ENCODE measurements at regions of chr13 and their contacts with region 1.

Region 1: GRCh38 chr13:44259045-44260027 is 114.3 kb upstream of the SERP2 start:
- DNase-seq: peak; percentile 94
- H3K4me3 Mint-ChIP-seq: peak overlapping the region; percentile 62
- H3K27ac Mint-ChIP-seq: peak overlapping the region; percentile 88
- H3K4me1 Mint-ChIP-seq: peaks cover 24% of the 10 kb centered on the region
- H3K27me3 Mint-ChIP-seq: peaks cover 6% of the 10 kb centered on the region

Region 2: DNA sequence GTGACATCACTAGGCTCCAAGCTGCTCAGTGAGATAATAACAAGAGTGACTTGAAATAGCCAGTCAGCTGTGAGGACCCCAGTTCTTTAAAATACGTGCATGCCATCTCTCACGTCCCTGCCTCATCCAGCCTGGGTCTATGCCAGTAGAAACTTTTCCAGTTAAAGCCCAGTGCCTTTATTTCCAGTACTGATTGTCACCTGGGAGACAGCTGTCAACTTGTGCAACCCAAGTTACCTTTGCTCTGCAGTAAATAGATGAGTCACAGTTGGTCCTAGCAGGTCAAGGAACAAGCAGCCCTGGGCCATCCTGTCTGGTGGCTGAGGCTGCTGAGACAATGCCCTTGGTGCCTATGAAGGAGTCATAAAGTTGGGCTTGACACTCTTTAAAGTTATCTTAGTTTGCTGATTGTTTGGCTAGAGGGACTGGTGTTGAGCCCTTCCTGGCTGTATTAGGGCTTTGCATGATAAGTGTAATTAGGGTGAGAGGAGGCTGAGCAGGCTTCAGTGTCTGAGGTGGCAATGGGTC is 150.9 kb before region 1 on chr13:
- CTCF ChIA-PET with region 1: no interaction called
- intact Hi-C with region 1: no loop called
- DNase-seq: no peak
- H3K4me3 Mint-ChIP-seq: no peak overlapping the region
- H3K27ac Mint-ChIP-seq: no peak overlapping the region
- H3K4me1 Mint-ChIP-seq: no peaks in the 10 kb centered on the region
- H3K27me3 Mint-ChIP-seq: peaks cover 11% of the 10 kb centered on the region

Region 3: GRCh38 chr13:44197791-44198770 is 61.3 kb before region 1 on chr13:
- CTCF ChIA-PET with region 1: no interaction called
- intact Hi-C with region 1: loop called (anchors 1 kb)
- DNase-seq: peak; percentile 65
- H3K4me3 Mint-ChIP-seq: no peak overlapping the region
- H3K27ac Mint-ChIP-seq: no peak overlapping the region
- H3K4me1 Mint-ChIP-seq: peaks cover 36% of the 10 kb centered on the region
- H3K27me3 Mint-ChIP-seq: peaks cover 6% of the 10 kb centered on the region

Region 4: DNA sequence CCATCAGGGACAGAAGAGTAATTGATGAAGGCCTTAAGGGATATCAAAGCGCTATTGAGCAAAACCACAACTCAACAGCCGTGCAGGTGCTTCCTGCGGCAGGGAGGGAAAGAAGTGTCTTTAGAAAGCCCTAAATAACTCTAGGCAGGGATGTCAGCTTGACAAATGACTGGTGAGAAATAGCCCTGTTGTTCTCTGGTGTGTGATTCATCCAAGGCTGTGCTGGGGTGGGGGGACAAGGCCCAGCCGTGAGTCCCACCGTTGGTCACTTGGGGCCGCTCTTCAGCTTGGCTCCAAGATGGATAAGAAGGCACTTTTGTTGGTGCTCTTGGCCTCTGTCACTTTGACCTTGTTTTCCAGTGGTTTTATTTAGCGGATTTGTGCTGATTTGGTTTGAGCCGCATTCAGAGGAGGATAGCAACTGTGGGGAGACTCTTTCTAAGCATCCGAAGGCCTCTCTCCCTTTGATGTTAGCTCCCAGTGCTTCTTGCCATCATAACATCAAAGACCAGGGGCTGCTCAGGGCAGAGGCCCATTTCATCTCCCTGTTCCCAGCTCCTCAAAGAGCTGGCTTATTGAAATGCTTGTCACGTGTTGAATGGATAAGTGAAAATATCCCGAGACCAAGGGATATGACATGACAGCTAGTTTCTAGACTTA is 16.0 kb before region 1 on chr13:
- CTCF ChIA-PET with region 1: no interaction called
- intact Hi-C with region 1: loop called (anchors 1 kb)
- DNase-seq: peak; percentile 69
- H3K4me3 Mint-ChIP-seq: no peak overlapping the region
- H3K27ac Mint-ChIP-seq: no peak overlapping the region
- H3K4me1 Mint-ChIP-seq: peaks cover 10% of the 10 kb centered on the region
- H3K27me3 Mint-ChIP-seq: peaks cover 4% of the 10 kb centered on the region

Region 5: DNA sequence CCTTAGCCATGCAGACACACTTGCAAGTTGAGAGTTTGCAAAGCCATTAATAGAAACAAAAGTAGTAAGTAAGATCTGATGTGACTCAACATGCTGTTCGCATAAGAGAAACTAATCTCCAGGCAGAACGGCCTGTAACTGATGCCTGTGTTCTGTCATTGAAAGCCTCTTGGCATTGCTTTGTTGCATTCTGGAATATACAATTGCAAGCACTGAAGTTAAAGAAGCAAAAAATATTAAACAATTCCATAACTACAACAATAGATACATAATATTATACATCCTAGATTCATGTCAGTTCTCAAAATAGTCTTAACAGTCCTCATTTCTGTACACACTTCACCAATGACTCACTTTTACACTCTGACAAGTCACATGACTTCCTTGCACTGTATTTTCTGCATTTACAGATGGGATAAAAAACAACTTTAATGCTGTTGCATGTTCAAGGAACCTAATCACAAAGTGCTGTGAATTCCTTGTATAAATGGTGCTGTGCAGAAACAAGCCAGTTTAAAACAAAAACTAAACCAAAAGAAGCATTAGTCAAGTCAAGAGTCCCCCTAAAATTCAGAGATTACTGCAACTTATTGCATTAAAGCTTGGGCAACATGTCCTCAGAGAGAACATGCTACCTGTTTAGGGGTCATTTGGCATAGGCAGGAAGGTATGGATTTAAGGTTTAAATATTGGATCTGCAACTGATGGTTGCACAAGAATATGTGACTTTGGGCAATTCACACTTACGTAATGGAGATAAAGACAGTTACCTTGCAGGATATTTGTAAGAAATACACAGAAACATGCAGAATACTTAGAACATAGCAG is 34.8 kb after region 1 on chr13:
- CTCF ChIA-PET with region 1: no interaction called
- intact Hi-C with region 1: loop called (anchors 1 kb)
- DNase-seq: peak; percentile 27
- H3K4me3 Mint-ChIP-seq: no peak overlapping the region
- H3K27ac Mint-ChIP-seq: peak overlapping the region; percentile 59
- H3K4me1 Mint-ChIP-seq: peaks cover 27% of the 10 kb centered on the region
- H3K27me3 Mint-ChIP-seq: peaks cover 18% of the 10 kb centered on the region

Region 6: GRCh38 chr13:44312898-44313551 is 53.7 kb after region 1 on chr13:
- CTCF ChIA-PET with region 1: interaction called, 4 read pairs
- intact Hi-C with region 1: loop called (anchors 1 kb)
- DNase-seq: peak; percentile 43
- H3K4me3 Mint-ChIP-seq: no peak overlapping the region
- H3K27ac Mint-ChIP-seq: peak overlapping the region; percentile 42
- H3K4me1 Mint-ChIP-seq: peaks cover 14% of the 10 kb centered on the region
- H3K27me3 Mint-ChIP-seq: peaks cover 21% of the 10 kb centered on the region

Region 7: DNA sequence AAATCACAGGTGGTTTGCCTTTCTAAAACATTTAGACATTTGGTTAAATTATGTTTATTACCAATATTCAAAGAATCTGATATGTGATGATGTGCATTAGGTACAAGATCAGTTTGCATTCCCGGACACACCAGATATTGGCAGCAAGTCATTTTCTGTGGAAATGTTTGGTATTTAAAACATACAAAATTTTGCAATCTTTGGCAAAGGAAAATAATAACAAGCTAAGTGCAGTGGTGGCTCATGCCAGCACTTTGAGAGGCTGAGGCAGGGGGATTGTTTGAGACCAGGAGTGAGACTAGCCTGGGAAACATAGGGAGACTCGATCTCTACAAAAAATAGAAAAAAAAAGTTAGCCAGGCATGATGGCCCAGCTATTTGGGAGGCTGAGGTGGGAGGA is 345.9 kb after region 1 on chr13:
- CTCF ChIA-PET with region 1: no interaction called
- intact Hi-C with region 1: no loop called
- DNase-seq: no peak
- H3K4me3 Mint-ChIP-seq: no peak overlapping the region
- H3K27ac Mint-ChIP-seq: no peak overlapping the region
- H3K4me1 Mint-ChIP-seq: no peaks in the 10 kb centered on the region
- H3K27me3 Mint-ChIP-seq: no peaks in the 10 kb centered on the region

Region 8: GRCh38 chr13:44917589-44918325 is 658.4 kb after region 1 on chr13:
- CTCF ChIA-PET with region 1: no interaction called
- intact Hi-C with region 1: loop called (anchors 5 kb)
- DNase-seq: peak; percentile 97
- H3K4me3 Mint-ChIP-seq: no peak overlapping the region
- H3K27ac Mint-ChIP-seq: no peak overlapping the region
- H3K4me1 Mint-ChIP-seq: peaks cover 3% of the 10 kb centered on the region
- H3K27me3 Mint-ChIP-seq: no peaks in the 10 kb centered on the region